Dorsolateral prefrontal cortex (tissue), 120 donors: ENCODE measurements at regions of chr6 and their contacts with region 1.

Region 1: DNA sequence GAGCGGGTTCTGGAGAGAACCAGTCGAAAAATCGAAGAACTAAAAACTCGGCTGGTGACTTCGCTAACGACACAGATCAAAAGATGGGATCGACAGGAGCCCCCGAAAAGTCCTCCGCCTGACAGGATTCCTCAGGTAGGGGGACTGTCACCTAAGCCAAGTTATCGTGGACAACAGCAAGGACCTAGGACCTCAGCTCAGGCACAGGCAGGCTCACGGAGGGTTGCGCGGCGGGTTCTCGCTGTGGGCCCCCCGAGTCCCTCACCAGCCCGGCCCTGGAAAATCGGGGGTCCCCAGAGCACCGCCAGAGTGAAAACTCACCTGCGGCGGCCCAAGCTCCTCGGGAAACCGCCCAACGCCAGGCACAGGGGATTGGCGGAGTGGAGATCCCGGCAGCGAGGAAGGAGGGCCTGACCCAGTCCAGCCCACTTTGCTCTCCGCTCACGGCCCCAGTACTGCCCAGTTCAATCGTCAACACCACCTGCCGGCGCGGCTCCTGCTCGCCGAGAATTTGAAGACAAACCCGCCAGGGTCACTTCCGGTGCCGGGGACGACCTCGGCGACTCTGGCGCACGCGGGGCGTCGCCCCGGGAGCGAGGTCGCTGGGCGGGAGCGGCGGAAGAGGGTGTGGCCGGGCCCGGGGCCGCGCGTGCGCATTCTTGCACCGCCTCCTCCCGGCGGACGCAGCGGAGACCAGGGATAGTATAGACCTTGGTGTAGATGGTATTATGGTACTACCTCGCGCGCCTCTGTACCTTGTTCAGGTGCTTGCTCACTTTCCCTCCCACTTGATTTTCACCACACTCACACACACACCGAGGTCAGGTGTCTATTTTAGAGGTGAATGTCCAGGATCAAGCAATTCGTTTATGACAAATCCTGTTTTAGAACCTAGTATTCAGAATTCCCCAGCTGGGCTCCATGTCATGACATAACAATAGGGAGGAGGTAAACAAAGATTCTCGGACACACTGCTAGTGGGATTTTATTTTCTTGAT is at the start of gene KATNA1:
- DNase-seq: peak; percentile 63 to 93 (median 78)
- H3K4me3 ChIP-seq: peak within 1 kb of the TSS; percentile 60 to 99 (median 90)
- H3K27ac ChIP-seq: peak within 1 kb of the TSS in 56 of 59 donors; percentile 4 to 90 (median 76)
- H3K27me3 ChIP-seq: no peaks in the 10 kb centered on the region
- CTCF ChIP-seq: peak in 39 of 56 donors; percentile 5 to 58 (median 35)
- total RNA-seq, gene KATNA1: 4.9 to 16.3 (median 9.9) TPM

Region 2: DNA sequence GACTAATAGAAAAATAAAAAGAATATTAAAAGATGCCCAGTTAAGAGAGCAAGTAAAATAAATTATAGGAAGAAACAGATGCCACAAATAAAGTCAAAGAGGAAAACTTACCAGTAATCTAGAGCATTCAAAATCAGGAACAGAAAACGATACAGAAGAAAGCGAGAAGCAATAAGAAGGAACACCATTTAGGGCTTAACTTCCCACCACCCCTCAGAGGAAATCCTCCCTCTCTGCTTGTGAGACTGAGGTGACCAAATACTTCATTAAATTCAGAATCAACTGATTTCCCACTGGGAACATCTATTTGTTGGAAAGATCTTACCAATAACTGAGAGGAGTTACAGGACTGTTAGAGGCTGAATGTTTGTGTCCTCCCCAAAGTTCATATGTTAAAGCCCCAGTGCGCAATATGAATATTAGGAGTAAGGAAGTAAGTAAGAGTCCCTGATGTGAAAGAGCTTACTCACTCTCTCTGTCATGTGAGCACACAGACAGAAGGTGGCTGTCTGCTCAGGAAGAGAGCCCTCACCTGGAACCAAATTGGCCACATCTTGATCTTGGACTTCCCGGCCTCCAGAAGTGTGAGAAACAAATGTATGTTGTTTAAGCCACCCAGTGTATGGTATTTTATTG is 19.5 kb before region 1 on chr6:
- intact Hi-C with region 1: no loop called
- DNase-seq: no peak
- H3K4me3 ChIP-seq: no peak overlapping the region
- H3K27ac ChIP-seq: no peak overlapping the region
- H3K27me3 ChIP-seq: no peaks in the 10 kb centered on the region
- CTCF ChIP-seq: no peak

Region 3: DNA sequence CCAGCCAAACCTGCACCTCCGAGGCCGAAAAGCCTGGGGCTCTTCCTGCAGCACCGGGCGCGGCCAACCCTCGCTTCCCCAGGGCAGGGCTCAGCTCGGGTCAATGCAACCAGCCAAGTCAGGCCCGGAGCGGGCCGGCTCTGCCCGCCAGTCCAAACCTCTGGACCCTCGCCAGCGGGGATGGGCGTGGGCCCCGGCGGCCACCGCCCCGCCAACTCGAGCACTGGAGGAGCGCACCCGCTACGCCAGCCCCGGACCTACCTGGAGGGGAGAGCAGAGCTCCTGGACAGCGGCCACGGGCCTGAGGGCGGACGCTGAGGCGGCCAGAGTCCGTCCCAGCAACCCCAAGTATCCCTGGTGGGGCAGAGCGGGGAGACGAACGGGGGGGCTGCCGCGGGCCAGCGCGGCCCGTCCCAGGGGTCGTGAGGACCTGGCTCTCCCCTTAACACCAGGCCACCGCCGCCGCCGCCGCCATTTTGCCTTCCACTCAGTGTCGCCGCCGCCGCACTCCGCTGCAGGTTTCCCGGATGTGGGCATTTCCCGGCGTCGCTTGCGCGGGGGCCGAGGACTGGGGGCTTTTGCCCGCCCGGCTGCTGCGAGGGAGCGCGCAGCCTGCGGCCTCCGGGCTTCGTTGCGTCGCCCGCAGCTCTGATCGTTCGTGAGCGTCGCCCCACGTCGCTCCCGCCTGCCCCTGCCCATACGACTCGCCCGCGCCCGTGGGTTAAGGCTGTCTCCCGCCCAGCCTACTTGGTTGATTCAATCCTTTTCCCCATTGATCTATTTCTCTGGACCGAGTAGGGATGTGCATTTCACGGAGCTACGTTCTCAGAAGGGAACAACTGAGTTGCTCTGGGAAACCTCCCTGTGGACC is 69.4 kb after region 1 on chr6 and contains the start of gene LATS1:
- intact Hi-C with region 1: loop called in 1 of 2 experiments (anchors 5 kb)
- DNase-seq: peak; percentile 78 to 94 (median 90)
- H3K4me3 ChIP-seq: peak within 1 kb of the TSS; percentile 56 to 100 (median 96)
- H3K27ac ChIP-seq: peak within 1 kb of the TSS; percentile 85 to 100 (median 97)
- H3K27me3 ChIP-seq: no peaks in the 10 kb centered on the region
- CTCF ChIP-seq: peak in 41 of 56 donors; percentile 3 to 60 (median 30)
- total RNA-seq, gene LATS1: 26.8 to 50.8 (median 36.9) TPM